K562 (cell line): ENCODE measurements at regions of chr4 and their contacts with region 1.

Region 1: GRCh38 chr4:76179398-76180318 is 31.5 kb upstream of the NUP54 start:
- DNase-seq: peak; percentile 77 to 90 (median 83)
- ATAC-seq: peak; percentile 100
- H3K4me3 ChIP-seq: no peak overlapping the region
- H3K27ac ChIP-seq: peak overlapping the region; percentile 13; the same call in 1 of the 3 replicates
- H3K4me1 ChIP-seq: peaks cover 0 to 5% of the 10 kb centered on the region in 2 experiments; a peak in 3 of 5 replicates
- H3K27me3 ChIP-seq: no peaks in the 10 kb centered on the region
- CTCF ChIP-seq: peak; percentile 84 to 91 (median 90)
- EP300 ChIP-seq: no peak
- POLR2A ChIP-seq: no peak
- RAD21 ChIP-seq: peak; percentile 79 to 92

Region 2: DNA sequence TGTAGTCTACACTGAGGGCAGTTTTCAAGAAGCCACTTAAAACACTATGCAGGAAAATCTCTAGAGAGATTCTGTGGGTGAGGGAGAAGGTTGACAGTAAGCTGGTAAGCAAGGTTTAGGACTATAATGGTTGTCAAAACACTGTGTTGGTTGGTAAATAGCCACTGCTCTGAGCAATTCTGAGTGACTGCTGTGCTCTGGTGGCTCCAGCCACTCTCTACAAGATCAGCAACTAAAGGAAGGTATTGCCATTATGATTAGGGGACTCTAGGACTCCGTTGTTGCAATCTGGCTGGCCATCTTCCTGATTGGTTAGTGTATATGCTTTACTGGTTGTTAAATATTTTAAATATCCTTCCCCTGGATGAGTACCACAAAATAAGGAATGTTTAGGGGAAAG is 66.4 kb after region 1 on chr4:
- CTCF ChIA-PET with region 1: no interaction called
- POLR2A ChIA-PET with region 1: no interaction called
- in situ Hi-C with region 1: no loop called
- intact Hi-C with region 1: loop called (anchors 2 kb)
- DNase-seq: no peak
- ATAC-seq: no peak; the same call in 2 of the 3 replicates
- H3K4me3 ChIP-seq: no peak overlapping the region
- H3K27ac ChIP-seq: no peak overlapping the region
- H3K4me1 ChIP-seq: no peaks in the 10 kb centered on the region
- H3K27me3 ChIP-seq: no peaks in the 10 kb centered on the region
- CTCF ChIP-seq: no peak
- EP300 ChIP-seq: no peak
- POLR2A ChIP-seq: no peak
- RAD21 ChIP-seq: peak in 1 of 2 experiments; percentile 22; a peak in 1 of 4 replicates

Region 3: GRCh38 chr4:76301068-76301774 is 121.6 kb after region 1 on chr4:
- CTCF ChIA-PET with region 1: no interaction called
- POLR2A ChIA-PET with region 1: no interaction called
- in situ Hi-C with region 1: no loop called
- intact Hi-C with region 1: loop called (anchors 2 kb)
- DNase-seq: peak; percentile 72 to 94 (median 82)
- ATAC-seq: peak; percentile 96
- H3K4me3 ChIP-seq: no peak overlapping the region
- H3K27ac ChIP-seq: peak overlapping the region; percentile 86
- H3K4me1 ChIP-seq: peaks cover 7 to 39% of the 10 kb centered on the region in 2 experiments
- H3K27me3 ChIP-seq: no peaks in the 10 kb centered on the region
- CTCF ChIP-seq: no peak
- EP300 ChIP-seq: peak; percentile 91
- POLR2A ChIP-seq: no peak
- RAD21 ChIP-seq: no peak

Region 4: GRCh38 chr4:76377911-76378310 is 198.3 kb after region 1 on chr4:
- CTCF ChIA-PET with region 1: interaction called, 13 read pairs
- POLR2A ChIA-PET with region 1: interaction called, 6 read pairs
- in situ Hi-C with region 1: no loop called
- intact Hi-C with region 1: loop called (anchors 1 kb)
- DNase-seq: peak; percentile 31 to 69 (median 49)
- ATAC-seq: peak; percentile 83
- H3K4me3 ChIP-seq: no peak overlapping the region
- H3K27ac ChIP-seq: no peak overlapping the region
- H3K4me1 ChIP-seq: peaks cover 0 to 7% of the 10 kb centered on the region in 2 experiments; a peak in 1 of 5 replicates
- H3K27me3 ChIP-seq: no peaks in the 10 kb centered on the region
- CTCF ChIP-seq: peak; percentile 75 to 79 (median 77)
- EP300 ChIP-seq: no peak
- POLR2A ChIP-seq: no peak
- RAD21 ChIP-seq: peak; percentile 54 to 83

Region 5: DNA sequence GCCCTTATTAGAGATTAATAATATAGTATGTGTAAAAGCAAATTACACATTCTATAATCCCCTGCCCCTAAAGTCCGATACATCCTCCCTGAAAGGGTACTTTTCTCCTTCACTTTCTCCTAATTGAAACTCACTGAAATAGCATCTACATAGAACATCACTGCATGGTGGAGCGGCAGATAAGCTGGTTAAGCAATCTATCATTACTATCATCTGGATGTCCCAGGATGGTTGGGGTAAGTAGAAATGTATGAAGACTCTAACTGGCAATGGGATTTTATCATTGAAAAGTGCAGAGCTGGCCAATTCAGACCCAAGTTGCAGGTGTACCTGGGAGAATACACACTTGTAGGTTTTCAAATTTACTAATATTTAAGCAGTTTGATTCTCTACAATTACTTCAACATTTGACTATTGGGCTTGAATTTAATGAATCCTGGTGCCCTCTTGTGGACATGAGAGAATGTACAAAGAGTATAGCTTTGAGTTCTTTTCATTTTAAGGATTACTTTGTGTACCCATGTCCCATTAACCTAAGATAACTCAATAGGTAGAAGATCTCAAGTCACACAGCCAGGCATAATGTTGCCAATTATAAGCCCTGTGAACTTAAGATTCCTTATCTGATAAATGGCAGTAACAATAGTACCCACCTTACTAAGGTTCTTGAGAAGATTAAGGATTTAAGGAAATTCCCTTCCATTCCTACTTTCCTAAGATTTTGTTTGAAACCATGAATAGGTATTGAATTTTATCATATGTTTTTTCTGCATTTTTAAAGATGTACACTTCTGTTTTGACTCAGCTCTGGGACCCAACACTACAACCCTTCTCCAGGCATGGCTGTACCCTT is 325.2 kb after region 1 on chr4:
- CTCF ChIA-PET with region 1: interaction called, 8 read pairs
- POLR2A ChIA-PET with region 1: no interaction called
- in situ Hi-C with region 1: no loop called
- intact Hi-C with region 1: loop called (anchors 5 kb)
- DNase-seq: peak; percentile 13 to 52 (median 28)
- ATAC-seq: peak; percentile 70
- H3K4me3 ChIP-seq: no peak overlapping the region
- H3K27ac ChIP-seq: no peak overlapping the region
- H3K4me1 ChIP-seq: no peaks in the 10 kb centered on the region
- H3K27me3 ChIP-seq: peaks cover 2 to 16% of the 10 kb centered on the region in 2 experiments; a peak in 3 of 5 replicates
- CTCF ChIP-seq: peak; percentile 48 to 71 (median 53); a peak in 4 of 6 replicates
- EP300 ChIP-seq: no peak
- POLR2A ChIP-seq: no peak
- RAD21 ChIP-seq: peak; percentile 67 to 79